ENCODE measurements at regions of chr11 and their contacts with region 1.

Region 1: GRCh38 chr11:13343931-13344717 is 66.5 kb downstream of the BMAL1 start:
- DNase-seq: peak; percentile 47 to 81 (median 73)
- ATAC-seq: peak; percentile 75
- H3K4me3 ChIP-seq: no peak overlapping the region
- H3K4me3 Mint-ChIP-seq: no peak overlapping the region
- H3K27ac ChIP-seq: no peak overlapping the region
- H3K27ac Mint-ChIP-seq: peak overlapping the region; percentile 2
- H3K4me1 ChIP-seq: peaks cover 16% of the 10 kb centered on the region
- H3K4me1 Mint-ChIP-seq: peaks cover 64% of the 10 kb centered on the region
- H3K27me3 ChIP-seq: no peaks in the 10 kb centered on the region
- H3K27me3 Mint-ChIP-seq: no peaks in the 10 kb centered on the region
- CTCF ChIP-seq: peak; percentile 93

Region 2: GRCh38 chr11:12963792-12964536 is 380.2 kb before region 1 on chr11:
- CTCF ChIA-PET with region 1: interaction called, 9 read pairs
- POLR2A ChIA-PET with region 1: no interaction called
- intact Hi-C with region 1: loop called in 1 of 2 experiments (anchors 1 kb)
- DNase-seq: peak; percentile 11 to 69 (median 58)
- ATAC-seq: peak; percentile 58
- H3K4me3 ChIP-seq: no peak overlapping the region
- H3K4me3 Mint-ChIP-seq: no peak overlapping the region
- H3K27ac ChIP-seq: no peak overlapping the region
- H3K27ac Mint-ChIP-seq: no peak overlapping the region
- H3K4me1 ChIP-seq: no peaks in the 10 kb centered on the region
- H3K4me1 Mint-ChIP-seq: no peaks in the 10 kb centered on the region
- H3K27me3 ChIP-seq: peaks cover 0 to 3% of the 10 kb centered on the region in 2 experiments
- H3K27me3 Mint-ChIP-seq: peaks cover 30% of the 10 kb centered on the region
- CTCF ChIP-seq: peak; percentile 52

Region 3: DNA sequence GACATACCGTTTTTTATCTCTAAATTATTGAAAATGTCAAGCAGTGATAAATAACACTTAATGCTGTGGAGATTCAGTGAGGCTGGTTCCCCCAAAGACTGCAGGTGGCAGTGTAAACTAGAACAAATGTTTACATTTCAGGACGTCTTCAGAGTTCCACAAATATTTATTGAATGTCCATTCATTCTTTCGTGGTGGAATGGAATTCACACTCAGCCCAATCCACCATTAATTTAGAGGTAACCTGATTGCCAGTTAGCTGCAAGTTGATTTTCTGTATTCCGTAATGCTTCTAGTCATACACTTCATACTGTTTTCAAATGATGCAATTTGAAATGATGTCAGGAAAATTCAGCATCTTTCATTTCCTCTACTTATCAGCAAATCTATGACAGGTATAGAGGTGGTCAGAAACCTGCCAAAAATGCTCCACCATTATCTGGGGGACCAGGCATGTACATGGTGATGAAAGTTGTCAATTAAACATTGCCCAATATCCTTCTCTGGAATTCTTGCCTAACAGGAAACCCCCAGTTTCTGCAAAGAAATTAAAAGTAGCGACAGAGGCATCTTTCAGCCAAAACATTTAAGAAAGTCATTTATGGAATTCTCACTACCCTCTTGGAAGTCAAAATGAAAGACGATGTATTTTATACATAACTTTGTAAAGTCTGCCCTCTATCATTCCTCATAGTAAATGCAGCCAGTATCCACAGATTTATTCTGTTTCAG is 160.9 kb before region 1 on chr11:
- CTCF ChIA-PET with region 1: interaction called, 20 read pairs
- POLR2A ChIA-PET with region 1: no interaction called
- intact Hi-C with region 1: loop called (anchors 1 to 2 kb)
- DNase-seq: peak in 2 of 9 experiments; percentile 39 to 49
- ATAC-seq: no peak
- H3K4me3 ChIP-seq: no peak overlapping the region
- H3K4me3 Mint-ChIP-seq: no peak overlapping the region
- H3K27ac ChIP-seq: no peak overlapping the region
- H3K27ac Mint-ChIP-seq: no peak overlapping the region
- H3K4me1 ChIP-seq: peaks cover 4% of the 10 kb centered on the region
- H3K4me1 Mint-ChIP-seq: peaks cover 6% of the 10 kb centered on the region
- H3K27me3 ChIP-seq: peaks cover 0 to 3% of the 10 kb centered on the region in 2 experiments
- H3K27me3 Mint-ChIP-seq: peaks cover 19% of the 10 kb centered on the region
- CTCF ChIP-seq: peak; percentile 36

Region 4: DNA sequence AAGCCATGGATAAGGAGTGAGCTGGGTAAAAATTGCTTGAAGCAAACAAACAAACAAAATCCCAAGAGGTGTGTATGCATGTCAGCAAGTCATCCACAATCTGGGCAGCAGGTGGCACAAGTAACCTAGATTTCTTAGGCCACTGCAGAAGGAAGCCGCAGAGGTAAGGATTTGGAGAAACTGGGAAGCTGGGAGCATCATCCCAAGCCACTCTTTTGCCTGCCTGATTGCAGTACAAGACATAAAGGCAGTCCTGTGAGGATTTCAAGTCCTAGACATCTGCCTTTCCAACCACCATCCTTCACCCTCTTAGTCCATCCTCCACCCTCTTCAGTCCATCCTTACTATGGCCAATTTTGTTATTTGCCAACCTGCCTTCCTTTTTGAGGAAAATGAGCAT is 133.7 kb before region 1 on chr11:
- CTCF ChIA-PET with region 1: interaction called, 17 read pairs
- POLR2A ChIA-PET with region 1: no interaction called
- intact Hi-C with region 1: loop called (anchors 1 to 2 kb)
- DNase-seq: peak in 4 of 9 experiments; percentile 26 to 52 (median 36)
- ATAC-seq: peak; percentile 26
- H3K4me3 ChIP-seq: no peak overlapping the region
- H3K4me3 Mint-ChIP-seq: no peak overlapping the region
- H3K27ac ChIP-seq: no peak overlapping the region
- H3K27ac Mint-ChIP-seq: no peak overlapping the region
- H3K4me1 ChIP-seq: peaks cover 7% of the 10 kb centered on the region
- H3K4me1 Mint-ChIP-seq: peaks cover 15% of the 10 kb centered on the region
- H3K27me3 ChIP-seq: no peaks in the 10 kb centered on the region
- H3K27me3 Mint-ChIP-seq: peaks cover 7% of the 10 kb centered on the region
- CTCF ChIP-seq: peak; percentile 22

Region 5: GRCh38 chr11:13249996-13250395 is 94.1 kb before region 1 on chr11:
- CTCF ChIA-PET with region 1: interaction called, 42 read pairs
- POLR2A ChIA-PET with region 1: no interaction called
- intact Hi-C with region 1: loop called (anchors 2 kb)
- DNase-seq: peak in 2 of 9 experiments; percentile 26 to 40
- ATAC-seq: no peak
- H3K4me3 ChIP-seq: no peak overlapping the region
- H3K4me3 Mint-ChIP-seq: no peak overlapping the region
- H3K27ac ChIP-seq: no peak overlapping the region
- H3K27ac Mint-ChIP-seq: no peak overlapping the region
- H3K4me1 ChIP-seq: no peaks in the 10 kb centered on the region
- H3K4me1 Mint-ChIP-seq: no peaks in the 10 kb centered on the region
- H3K27me3 ChIP-seq: no peaks in the 10 kb centered on the region
- H3K27me3 Mint-ChIP-seq: peaks cover 17% of the 10 kb centered on the region
- CTCF ChIP-seq: no peak

Region 6: DNA sequence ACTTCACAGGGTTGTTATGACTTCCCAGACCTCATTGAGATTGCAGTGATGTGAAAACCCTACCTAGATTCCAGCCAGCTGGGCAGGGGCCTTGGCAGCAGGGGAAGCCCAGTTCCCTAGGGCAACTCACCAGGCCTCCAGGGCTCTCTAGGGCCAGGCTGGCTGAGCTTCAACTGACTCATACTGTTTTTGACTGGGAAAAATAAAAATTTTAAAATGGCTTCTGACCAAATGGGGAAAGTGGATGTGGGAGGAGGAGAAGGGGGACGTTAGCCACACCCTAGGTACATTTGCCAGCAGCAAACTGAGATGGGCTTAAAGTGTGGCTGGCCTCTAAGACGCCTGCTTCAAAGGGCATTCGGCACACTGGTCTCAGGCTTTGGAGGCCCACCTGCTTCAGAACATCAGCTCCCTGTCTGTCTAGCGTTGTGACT is 27.6 kb before region 1 on chr11:
- CTCF ChIA-PET with region 1: interaction called, 13 read pairs
- POLR2A ChIA-PET with region 1: no interaction called
- intact Hi-C with region 1: no loop called
- DNase-seq: no peak
- ATAC-seq: no peak
- H3K4me3 ChIP-seq: no peak overlapping the region
- H3K4me3 Mint-ChIP-seq: no peak overlapping the region
- H3K27ac ChIP-seq: no peak overlapping the region
- H3K27ac Mint-ChIP-seq: no peak overlapping the region
- H3K4me1 ChIP-seq: peaks cover 47% of the 10 kb centered on the region
- H3K4me1 Mint-ChIP-seq: peaks cover 87% of the 10 kb centered on the region
- H3K27me3 ChIP-seq: no peaks in the 10 kb centered on the region
- H3K27me3 Mint-ChIP-seq: no peaks in the 10 kb centered on the region
- CTCF ChIP-seq: no peak

Region 7: DNA sequence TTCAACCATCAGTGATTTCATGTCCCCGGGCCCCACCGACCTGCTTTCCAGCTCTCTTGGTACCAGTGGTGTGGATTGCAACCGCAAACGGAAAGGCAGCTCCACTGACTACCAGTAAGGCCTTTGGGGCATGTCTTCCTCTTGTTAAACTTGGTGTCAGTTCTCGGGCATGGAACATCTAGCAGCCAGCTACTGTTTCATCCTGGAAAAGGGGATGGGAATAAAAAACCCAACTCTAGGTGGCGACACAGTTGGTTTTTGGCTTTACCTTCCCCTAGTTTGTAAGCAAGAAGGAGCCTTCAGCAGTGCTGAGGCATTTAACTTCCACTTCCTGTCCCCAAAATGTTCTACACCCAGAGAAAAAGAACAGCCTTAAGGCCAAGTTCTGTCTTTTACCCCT is 10.2 kb after region 1 on chr11:
- CTCF ChIA-PET with region 1: interaction called, 27 read pairs
- POLR2A ChIA-PET with region 1: no interaction called
- intact Hi-C with region 1: no loop called
- DNase-seq: no peak
- ATAC-seq: no peak
- H3K4me3 ChIP-seq: no peak overlapping the region
- H3K4me3 Mint-ChIP-seq: no peak overlapping the region
- H3K27ac ChIP-seq: no peak overlapping the region
- H3K27ac Mint-ChIP-seq: no peak overlapping the region
- H3K4me1 ChIP-seq: no peaks in the 10 kb centered on the region
- H3K4me1 Mint-ChIP-seq: peaks cover 5% of the 10 kb centered on the region
- H3K27me3 ChIP-seq: no peaks in the 10 kb centered on the region
- H3K27me3 Mint-ChIP-seq: no peaks in the 10 kb centered on the region
- CTCF ChIP-seq: no peak

Measured in CD8-positive, alpha-beta T cell (primary cell).